GM13976 (cell line): ENCODE measurements at regions of chr9 and their contacts with region 1.

Region 1: DNA sequence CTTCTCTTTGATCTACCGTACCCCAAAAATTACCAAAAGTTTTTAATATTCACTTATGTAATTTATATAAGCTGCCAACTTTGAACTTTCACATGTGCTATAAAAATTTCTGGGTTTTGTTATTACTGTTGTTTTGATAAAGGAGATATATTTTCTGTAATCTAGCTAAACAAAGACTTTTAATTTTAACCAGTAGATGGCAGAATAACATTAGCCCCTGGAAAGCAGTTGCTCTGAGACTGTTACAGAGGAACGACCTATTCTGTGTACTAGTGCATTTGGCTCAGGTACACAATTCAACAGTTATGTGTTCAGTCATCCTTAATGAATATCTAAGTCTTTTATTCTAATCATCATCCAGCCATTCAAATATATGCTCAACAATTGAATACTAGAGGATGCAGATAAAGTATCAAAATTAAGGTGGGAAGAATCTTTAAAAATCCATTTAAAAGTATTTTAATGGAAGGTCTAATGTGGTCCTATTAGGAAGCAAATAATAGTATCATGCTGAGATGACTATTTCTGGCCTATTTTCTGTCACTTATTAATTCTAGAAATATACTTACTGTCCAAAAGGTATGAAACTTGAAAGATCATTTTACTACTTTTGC is 8.6 kb downstream of the KLHL9 start:
- DNase-seq: peak; percentile 50
- CTCF ChIP-seq: peak; percentile 24

Region 2: DNA sequence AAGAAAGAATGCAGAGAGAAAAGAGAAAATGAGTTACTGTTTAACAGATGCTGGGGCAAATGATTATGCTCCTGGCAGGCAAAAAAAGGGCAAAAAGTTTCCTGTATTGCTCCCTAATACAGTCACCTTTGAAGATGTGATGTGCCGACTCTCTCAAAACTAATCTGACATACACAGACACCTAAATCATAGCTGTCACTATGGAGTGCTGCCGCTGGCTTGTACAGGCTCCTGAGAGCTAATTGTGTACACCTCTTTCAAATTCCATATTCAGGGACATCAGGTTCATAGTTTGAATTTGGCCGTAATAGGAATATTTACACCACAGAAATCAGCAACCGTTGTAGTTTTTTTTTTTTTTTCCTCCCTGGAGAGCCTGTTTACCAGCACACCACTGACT is 655.0 kb before region 1 on chr9:
- in situ Hi-C with region 1: no loop called
- DNase-seq: no peak
- CTCF ChIP-seq: no peak

Region 3: DNA sequence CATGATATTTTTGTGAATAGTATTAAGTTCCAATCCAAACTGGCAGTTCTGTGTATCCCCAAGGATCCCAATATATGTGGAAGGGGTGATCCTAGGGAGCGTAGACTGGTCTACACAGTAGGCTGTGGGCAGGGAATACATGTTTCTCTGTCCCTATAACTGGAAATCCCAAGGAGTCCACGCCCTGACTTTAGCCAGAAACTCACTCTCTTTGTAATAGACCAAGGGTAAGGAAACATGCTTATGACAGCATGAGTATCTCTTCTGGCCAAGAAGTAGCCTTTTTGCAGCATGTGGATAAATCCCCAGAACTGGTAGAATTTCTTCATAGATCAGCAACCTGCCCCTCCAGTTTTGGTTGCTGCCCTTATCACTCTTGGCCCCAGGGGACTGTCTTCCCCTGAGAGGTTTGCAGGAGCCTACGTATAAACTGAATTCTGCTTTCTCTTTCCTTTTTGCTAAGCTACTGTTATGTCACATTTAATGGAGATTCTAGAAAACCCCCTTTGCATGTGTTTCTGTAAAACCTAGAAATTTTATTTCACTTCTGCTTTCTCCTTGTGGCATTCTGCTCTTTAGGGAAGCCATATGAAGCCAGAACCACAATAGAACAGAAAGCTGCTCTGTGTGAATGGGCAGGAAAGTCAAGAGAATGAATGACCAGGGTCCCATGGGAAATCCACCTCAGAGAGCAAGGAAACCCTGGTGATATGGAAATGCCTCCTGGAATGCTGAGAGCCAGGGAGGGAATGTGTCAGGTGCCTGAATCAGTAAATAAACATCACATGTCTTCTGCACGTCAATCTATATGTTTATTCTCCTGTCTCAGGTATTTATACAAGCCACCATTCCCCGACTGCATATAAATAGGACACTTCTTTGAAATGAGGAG is 55.1 kb after region 1 on chr9:
- in situ Hi-C with region 1: no loop called
- DNase-seq: peak; percentile 63
- CTCF ChIP-seq: no peak

Region 4: GRCh38 chr9:21395778-21396717 is 69.4 kb after region 1 on chr9:
- in situ Hi-C with region 1: loop called (anchors 10 kb)
- DNase-seq: peak; percentile 56
- CTCF ChIP-seq: peak; percentile 90

Region 5: GRCh38 chr9:21455320-21455719 is 128.7 kb after region 1 on chr9:
- in situ Hi-C with region 1: loop called (anchors 10 kb)
- DNase-seq: peak; percentile 29
- CTCF ChIP-seq: peak; percentile 66

Region 6: GRCh38 chr9:21624675-21625644 is 298.3 kb after region 1 on chr9:
- in situ Hi-C with region 1: no loop called
- DNase-seq: no peak
- CTCF ChIP-seq: no peak